Mammary epithelial cell (primary cell): ENCODE measurements at regions of chr17 and their contacts with region 1.

Region 1: GRCh38 chr17:67602956-67603355 is 114.8 kb upstream of the NOL11 start:
- DNase-seq: peak; percentile 20
- H3K4me3 ChIP-seq: no peak overlapping the region
- H3K27ac ChIP-seq: no peak overlapping the region
- H3K4me1 ChIP-seq: no peaks in the 10 kb centered on the region
- H3K27me3 ChIP-seq: no peaks in the 10 kb centered on the region
- CTCF ChIP-seq: peak; percentile 36 to 52

Region 2: DNA sequence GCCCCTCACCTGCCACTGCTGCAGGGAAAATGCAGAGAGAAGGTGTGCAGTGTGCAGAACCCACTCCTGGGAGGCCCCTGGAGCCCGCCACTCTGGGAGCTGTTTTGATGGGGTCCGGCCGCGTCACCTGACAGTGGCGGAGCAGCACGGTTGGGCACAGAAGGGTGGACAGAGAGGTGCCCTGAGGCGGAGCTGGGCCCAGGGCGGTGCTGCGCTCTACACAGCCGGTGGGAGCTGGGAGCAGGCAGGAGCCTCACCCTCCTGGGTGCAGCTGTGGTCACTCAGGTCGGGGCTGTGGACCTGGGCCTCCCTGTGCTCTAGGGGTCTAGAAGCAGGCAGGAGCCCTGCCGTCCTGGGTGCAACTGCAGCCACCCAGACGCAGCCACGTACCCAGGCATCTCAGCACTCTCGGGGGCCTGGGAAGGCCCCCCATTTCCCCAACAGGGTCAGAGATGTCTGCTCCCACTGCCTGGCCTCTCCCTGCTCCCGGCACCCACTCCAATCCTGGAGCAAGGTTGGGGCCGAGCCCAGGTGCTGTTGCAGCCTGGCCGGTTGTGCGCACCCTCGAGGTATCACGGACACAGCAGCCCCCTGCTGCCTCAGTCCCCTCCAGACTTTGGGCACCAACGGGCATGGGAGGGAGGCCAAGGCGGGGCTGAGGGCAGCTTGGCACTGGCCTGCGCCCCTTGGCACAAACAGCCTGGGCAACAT is 1737.1 kb before region 1 on chr17:
- CTCF ChIA-PET with region 1: no interaction called
- dilution Hi-C with region 1: no loop called
- in situ Hi-C with region 1: no loop called
- intact Hi-C with region 1: no loop called
- DNase-seq: no peak
- H3K4me3 ChIP-seq: no peak overlapping the region
- H3K27ac ChIP-seq: no peak overlapping the region
- H3K4me1 ChIP-seq: no peaks in the 10 kb centered on the region
- H3K27me3 ChIP-seq: no peaks in the 10 kb centered on the region
- CTCF ChIP-seq: no peak

Region 3: DNA sequence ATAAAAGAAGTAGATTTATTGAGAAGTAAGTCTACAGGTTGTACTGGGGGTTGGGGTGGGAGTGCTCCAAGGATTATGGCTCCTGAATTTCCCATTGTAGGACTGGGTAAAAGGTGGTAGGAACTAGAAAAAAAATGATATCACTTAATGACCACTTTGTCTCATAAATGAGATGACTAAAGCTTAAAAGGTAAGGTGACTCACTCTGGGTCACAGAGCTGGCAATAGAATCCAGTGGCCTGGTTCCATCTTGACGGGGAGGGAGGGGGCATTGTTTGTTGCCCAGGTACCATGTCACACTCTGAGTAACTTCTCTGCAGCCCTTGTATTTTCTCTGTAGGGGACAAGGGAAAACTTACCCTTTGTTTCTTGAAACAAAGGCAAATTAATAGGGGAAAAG is 99.8 kb before region 1 on chr17:
- CTCF ChIA-PET with region 1: no interaction called
- dilution Hi-C with region 1: loop called (anchors 5 kb)
- in situ Hi-C with region 1: no loop called
- intact Hi-C with region 1: no loop called
- DNase-seq: peak; percentile 80
- H3K4me3 ChIP-seq: no peak overlapping the region
- H3K27ac ChIP-seq: no peak overlapping the region
- H3K4me1 ChIP-seq: peaks cover 13% of the 10 kb centered on the region
- H3K27me3 ChIP-seq: no peaks in the 10 kb centered on the region
- CTCF ChIP-seq: no peak

Region 4: DNA sequence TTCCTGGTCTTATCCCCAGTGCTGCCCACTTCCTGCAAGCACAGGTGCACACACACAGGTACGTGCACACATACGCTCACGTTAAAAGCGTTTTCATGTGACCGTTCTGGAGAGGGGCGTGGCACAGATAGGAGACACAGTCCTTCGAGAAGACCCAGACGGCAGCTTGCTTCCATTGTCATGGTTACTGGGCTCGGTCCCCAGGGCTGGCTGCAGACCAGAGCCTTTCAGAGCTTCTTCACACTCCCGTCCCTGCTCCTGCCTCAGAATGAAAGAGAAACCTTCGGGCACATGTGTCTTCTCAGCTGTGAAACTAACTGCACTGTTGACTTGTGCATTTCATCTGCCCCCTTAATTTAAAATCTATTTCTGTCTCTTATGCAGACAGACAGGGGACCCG is 71.7 kb before region 1 on chr17:
- CTCF ChIA-PET with region 1: no interaction called
- dilution Hi-C with region 1: loop called (anchors 5 kb)
- in situ Hi-C with region 1: no loop called
- intact Hi-C with region 1: no loop called
- DNase-seq: no peak
- H3K4me3 ChIP-seq: no peak overlapping the region
- H3K27ac ChIP-seq: no peak overlapping the region
- H3K4me1 ChIP-seq: no peaks in the 10 kb centered on the region
- H3K27me3 ChIP-seq: no peaks in the 10 kb centered on the region
- CTCF ChIP-seq: no peak

Region 5: GRCh38 chr17:67637917-67638641 is 35.1 kb after region 1 on chr17:
- CTCF ChIA-PET with region 1: no interaction called
- dilution Hi-C with region 1: loop called (anchors 5 kb)
- in situ Hi-C with region 1: no loop called
- intact Hi-C with region 1: no loop called
- DNase-seq: peak; percentile 99
- H3K4me3 ChIP-seq: no peak overlapping the region
- H3K27ac ChIP-seq: peak overlapping the region; percentile 32
- H3K4me1 ChIP-seq: peaks cover 26% of the 10 kb centered on the region
- H3K27me3 ChIP-seq: no peaks in the 10 kb centered on the region
- CTCF ChIP-seq: no peak

Region 6: GRCh38 chr17:67707442-67707841 is 104.5 kb after region 1 on chr17:
- CTCF ChIA-PET with region 1: no interaction called
- dilution Hi-C with region 1: no loop called
- in situ Hi-C with region 1: no loop called
- intact Hi-C with region 1: no loop called
- DNase-seq: no peak
- H3K4me3 ChIP-seq: no peak overlapping the region
- H3K27ac ChIP-seq: no peak overlapping the region
- H3K4me1 ChIP-seq: no peaks in the 10 kb centered on the region
- H3K27me3 ChIP-seq: no peaks in the 10 kb centered on the region
- CTCF ChIP-seq: no peak